Mammary epithelial cell (primary cell): ENCODE measurements at regions of chr19 and their contacts with region 1.

Region 1: DNA sequence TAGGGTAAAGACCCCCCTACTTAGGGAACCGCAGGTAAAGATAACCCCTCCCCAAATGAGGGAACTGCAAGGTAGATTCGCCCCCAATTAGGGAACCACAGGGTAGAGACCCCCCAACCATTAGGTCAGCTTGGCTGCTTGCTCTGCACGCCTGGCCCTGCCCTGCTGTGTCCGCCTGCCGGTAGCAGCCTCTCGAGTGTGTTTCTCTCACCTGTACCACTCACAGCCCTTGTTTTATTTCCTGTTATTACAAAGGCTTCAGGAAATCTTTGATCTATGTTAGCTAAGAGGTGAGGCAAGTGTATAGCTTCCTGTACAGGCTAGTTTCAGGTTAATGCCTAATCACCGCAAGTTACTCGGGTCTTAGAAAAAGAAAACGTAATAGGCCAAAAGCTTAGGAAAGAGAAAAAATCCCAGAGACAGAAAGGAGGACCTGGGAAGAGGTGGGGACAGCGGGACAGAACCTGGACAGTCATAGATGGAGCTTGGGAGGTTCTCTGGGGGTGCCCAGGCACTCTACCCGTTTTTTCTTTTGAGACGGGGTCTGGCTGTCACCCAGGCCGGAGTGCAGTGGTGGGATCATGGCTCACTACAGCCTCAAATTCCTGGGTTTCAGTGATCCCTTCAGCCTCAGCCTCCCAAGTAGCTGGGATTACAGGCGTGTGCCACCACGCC is 23.1 kb upstream of the EIF3G start:
- DNase-seq: no peak
- H3K4me3 ChIP-seq: no peak overlapping the region
- H3K27ac ChIP-seq: no peak overlapping the region
- H3K4me1 ChIP-seq: no peaks in the 10 kb centered on the region
- H3K27me3 ChIP-seq: no peaks in the 10 kb centered on the region
- CTCF ChIP-seq: no peak

Region 2: DNA sequence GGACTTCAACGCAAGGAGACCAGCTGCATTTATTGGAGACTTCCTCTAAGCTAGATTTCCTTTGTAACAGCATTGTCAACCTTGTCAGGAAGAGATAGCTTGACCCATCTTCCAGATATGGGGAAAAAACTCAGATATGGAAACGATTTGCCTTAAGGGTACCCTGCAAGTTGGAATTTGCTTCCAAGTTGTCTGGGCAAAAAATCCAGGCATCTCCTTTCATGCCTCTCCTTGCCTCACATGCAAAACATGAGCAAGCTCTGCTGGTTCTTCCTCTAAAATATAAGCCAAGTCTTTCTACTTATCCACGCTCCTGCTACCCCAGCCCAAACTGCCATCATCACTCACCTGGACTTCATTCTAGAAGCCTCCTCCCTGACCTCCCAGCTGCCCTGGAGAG is 58.3 kb after region 1 on chr19:
- CTCF ChIA-PET with region 1: no interaction called
- dilution Hi-C with region 1: loop called (anchors 5 kb)
- in situ Hi-C with region 1: no loop called
- intact Hi-C with region 1: no loop called
- DNase-seq: no peak
- H3K4me3 ChIP-seq: no peak overlapping the region
- H3K27ac ChIP-seq: no peak overlapping the region
- H3K4me1 ChIP-seq: no peaks in the 10 kb centered on the region
- H3K27me3 ChIP-seq: no peaks in the 10 kb centered on the region
- CTCF ChIP-seq: no peak